Panc1 (cell line): ENCODE measurements at regions of chr9 and their contacts with region 1.

Region 1: DNA sequence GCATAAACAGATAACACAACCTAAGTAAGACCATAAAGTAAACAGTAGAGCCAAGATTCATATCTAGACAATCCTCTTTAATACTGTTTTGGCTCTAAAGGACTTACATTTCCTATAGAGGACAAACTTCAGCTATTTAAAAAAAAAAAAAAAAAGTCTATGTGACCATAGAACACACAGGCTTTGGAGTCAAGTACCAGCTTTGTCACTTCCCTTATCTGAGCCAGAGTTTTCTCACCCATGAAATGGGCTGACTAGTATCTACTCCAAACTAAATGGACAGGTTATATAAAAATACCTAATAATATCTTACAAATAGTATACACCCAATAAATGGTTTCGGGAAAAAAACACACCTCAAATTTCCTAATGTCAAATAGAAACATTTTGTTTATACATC is 81.3 kb downstream of the STRBP start:
- DNase-seq: no peak
- ATAC-seq: no peak
- H3K4me3 ChIP-seq: no peak overlapping the region
- H3K27ac ChIP-seq: no peak overlapping the region
- H3K4me1 ChIP-seq: no peaks in the 10 kb centered on the region
- H3K27me3 ChIP-seq: no peaks in the 10 kb centered on the region
- CTCF ChIP-seq: no peak

Region 2: GRCh38 chr9:123201083-123201482 is 14.0 kb after region 1 on chr9:
- CTCF ChIA-PET with region 1: no interaction called
- POLR2A ChIA-PET with region 1: interaction called, 12 read pairs
- in situ Hi-C with region 1: no loop called
- intact Hi-C with region 1: no loop called
- DNase-seq: no peak
- ATAC-seq: no peak
- H3K4me3 ChIP-seq: no peak overlapping the region
- H3K27ac ChIP-seq: no peak overlapping the region
- H3K4me1 ChIP-seq: no peaks in the 10 kb centered on the region
- H3K27me3 ChIP-seq: no peaks in the 10 kb centered on the region
- CTCF ChIP-seq: no peak